K562 (cell line): ENCODE measurements at regions of chr2 and their contacts with region 1.

Region 1: DNA sequence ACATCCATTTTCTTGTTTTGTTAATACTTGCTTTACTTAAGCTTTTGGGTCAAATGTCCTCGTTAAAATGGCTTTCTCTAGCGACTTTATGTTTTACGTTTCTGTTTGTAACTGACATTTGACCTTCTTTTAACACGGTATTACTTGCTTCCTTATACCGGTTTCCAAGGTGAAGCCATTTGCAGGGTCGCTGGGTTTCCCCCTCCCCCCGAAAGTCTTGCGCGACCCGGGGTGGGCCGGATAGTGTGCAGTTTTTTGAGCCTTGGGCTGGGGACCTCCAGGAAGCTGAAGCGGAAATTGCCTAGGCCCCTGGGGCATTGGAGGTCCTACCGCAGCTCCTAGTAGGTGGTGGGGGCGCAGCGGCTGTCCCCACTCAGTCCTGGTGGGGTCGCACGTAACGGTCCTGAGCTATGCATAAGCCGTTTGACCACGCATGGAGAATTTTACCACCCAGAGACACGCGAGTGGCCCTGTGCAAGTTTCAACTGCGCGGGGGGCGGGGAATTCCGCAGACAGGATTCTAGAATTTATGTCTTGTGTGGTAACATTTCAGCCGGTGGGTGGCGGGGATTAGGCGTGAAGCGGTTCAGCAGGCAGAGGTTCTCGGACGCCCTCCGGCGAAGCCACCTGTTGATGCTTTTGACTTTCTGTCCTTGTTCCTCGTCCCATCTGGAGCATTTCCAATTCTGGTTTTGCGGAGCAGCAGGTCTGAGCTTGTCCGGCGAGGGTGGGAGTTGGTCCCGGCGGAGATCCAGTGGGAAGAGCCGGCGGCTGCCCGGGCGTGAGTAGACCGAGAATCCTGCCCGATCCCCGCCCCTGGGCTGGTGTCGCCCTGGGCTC is 2.4 kb downstream of the CFLAR start:
- DNase-seq: peak; percentile 52 to 92 (median 58)
- ATAC-seq: peak; percentile 60
- H3K4me3 ChIP-seq: peak overlapping the region; percentile 93
- H3K27ac ChIP-seq: peak overlapping the region; percentile 98
- H3K4me1 ChIP-seq: peaks cover 17 to 27% of the 10 kb centered on the region in 2 experiments; a peak in 4 of 5 replicates
- H3K27me3 ChIP-seq: no peaks in the 10 kb centered on the region
- CTCF ChIP-seq: peak; percentile 67 to 89 (median 83)
- EP300 ChIP-seq: no peak; the same call in 1 of the 2 replicates
- POLR2A ChIP-seq: peak; percentile 69
- RAD21 ChIP-seq: peak; percentile 19 to 65; a peak in 3 of 4 replicates

Region 2: DNA sequence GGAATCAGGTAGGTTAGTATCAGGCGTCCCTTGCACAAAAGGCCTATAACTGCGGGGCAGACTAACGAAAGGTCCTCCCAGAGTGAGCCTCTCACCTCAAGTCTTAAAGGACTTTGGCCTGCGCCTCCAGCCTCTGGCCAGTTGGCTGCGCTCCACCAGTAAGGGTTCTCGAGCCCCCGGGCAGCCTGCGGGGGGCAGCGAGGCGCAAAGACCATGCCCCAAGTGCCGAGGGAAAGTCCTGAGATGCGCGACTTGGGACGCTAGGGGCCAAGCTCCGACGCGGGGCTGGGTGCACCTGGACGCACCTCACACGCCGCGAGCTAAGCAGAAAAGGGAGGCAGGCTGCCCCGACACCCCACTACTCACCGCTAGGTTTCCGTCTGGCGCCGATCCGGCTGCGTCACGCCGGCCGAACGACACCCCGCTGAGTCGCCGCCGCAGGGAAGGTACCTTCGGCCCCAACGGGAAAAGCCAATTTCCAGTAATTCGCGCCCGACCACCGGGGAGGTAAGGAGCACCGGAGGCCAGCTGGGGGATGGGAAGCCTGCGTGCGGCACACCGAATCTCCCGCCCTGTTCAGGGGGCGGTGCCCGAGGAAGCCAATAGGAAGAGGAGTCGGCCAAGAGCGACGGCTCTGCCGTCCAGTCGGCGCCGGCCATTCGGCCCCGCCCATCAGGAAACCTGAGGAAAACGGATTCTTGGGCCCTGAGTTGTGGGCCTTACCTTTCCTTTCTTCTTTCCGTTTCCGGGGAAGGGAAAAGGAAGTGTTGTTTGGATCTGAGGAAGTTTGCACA is 155.0 kb before region 1 on chr2 and contains the start of gene ORC2:
- CTCF ChIA-PET with region 1: no interaction called
- POLR2A ChIA-PET with region 1: interaction called, 3 read pairs
- in situ Hi-C with region 1: no loop called
- intact Hi-C with region 1: loop called (anchors 2 kb)
- DNase-seq: peak; percentile 94 to 96 (median 94)
- ATAC-seq: peak; percentile 93
- H3K4me3 ChIP-seq: peak within 1 kb of the TSS; percentile 63
- H3K27ac ChIP-seq: peak within 1 kb of the TSS; percentile 94
- H3K4me1 ChIP-seq: peaks cover 8 to 10% of the 10 kb centered on the region in 2 experiments; a peak in 4 of 5 replicates
- H3K27me3 ChIP-seq: no peaks in the 10 kb centered on the region
- CTCF ChIP-seq: peak; percentile 73 to 97 (median 77)
- EP300 ChIP-seq: no peak
- POLR2A ChIP-seq: peak; percentile 81
- RAD21 ChIP-seq: peak; percentile 46 to 59
- polyA plus RNA-seq, gene ORC2: 5.6 to 9.7 TPM

Region 3: GRCh38 chr2:201071479-201072200 is 46.7 kb before region 1 on chr2 and contains the starts of genes HYCC2 and NDUFB3:
- CTCF ChIA-PET with region 1: interaction called, 4 read pairs
- POLR2A ChIA-PET with region 1: interaction called, 4 read pairs
- in situ Hi-C with region 1: no loop called
- intact Hi-C with region 1: loop called (anchors 2 kb)
- DNase-seq: peak; percentile 94 to 98 (median 96)
- ATAC-seq: peak; percentile 92
- H3K4me3 ChIP-seq: peak within 1 kb of the TSS; percentile 83
- H3K27ac ChIP-seq: peak within 1 kb of the TSS; percentile 99
- H3K4me1 ChIP-seq: peaks cover 4 to 5% of the 10 kb centered on the region in 2 experiments; a peak in 3 of 5 replicates
- H3K27me3 ChIP-seq: no peaks in the 10 kb centered on the region
- CTCF ChIP-seq: peak; percentile 38 to 47 (median 42); a peak in 4 of 6 replicates
- EP300 ChIP-seq: 0 out of 2 replicates have a peak, but pooled peaks have one; percentile 17
- POLR2A ChIP-seq: peak; percentile 84
- RAD21 ChIP-seq: 0 out of 4 replicates have a peak, but pooled peaks of 1 of the 2 experiments have one; percentile 2
- polyA plus RNA-seq, gene HYCC2: 7.5 to 9.8 TPM
- polyA plus RNA-seq, gene NDUFB3: 679 to 786 TPM

Region 4: DNA sequence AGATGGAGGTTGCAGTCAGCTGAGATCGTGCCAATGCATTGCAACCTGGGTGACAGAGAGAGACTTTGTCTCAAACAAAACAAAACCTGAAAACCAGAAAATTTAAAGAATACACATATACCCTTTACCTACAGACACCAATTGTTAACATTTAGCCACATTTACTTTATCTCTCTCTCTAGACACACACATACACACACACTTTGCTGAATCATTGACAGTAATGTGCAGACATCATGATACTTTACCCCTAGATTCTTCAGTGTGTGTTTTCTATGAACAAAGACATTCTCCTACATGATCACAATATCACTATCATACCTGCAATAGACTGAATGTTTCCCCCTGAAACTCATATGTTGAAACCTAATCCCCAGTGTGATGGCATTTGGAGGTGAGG is 12.6 kb before region 1 on chr2:
- CTCF ChIA-PET with region 1: no interaction called
- POLR2A ChIA-PET with region 1: interaction called, 12 read pairs
- in situ Hi-C with region 1: no loop called
- intact Hi-C with region 1: no loop called
- DNase-seq: no peak
- ATAC-seq: peak; percentile 72
- H3K4me3 ChIP-seq: no peak overlapping the region
- H3K27ac ChIP-seq: peak overlapping the region; percentile 49; the same call in 2 of the 3 replicates
- H3K4me1 ChIP-seq: peaks cover 6 to 8% of the 10 kb centered on the region in 2 experiments; a peak in 3 of 5 replicates
- H3K27me3 ChIP-seq: no peaks in the 10 kb centered on the region
- CTCF ChIP-seq: no peak
- EP300 ChIP-seq: no peak
- POLR2A ChIP-seq: no peak
- RAD21 ChIP-seq: no peak

Region 5: GRCh38 chr2:201158111-201158929 is 40.0 kb after region 1 on chr2:
- CTCF ChIA-PET with region 1: interaction called, 8 read pairs
- POLR2A ChIA-PET with region 1: interaction called, 3 read pairs
- in situ Hi-C with region 1: no loop called
- intact Hi-C with region 1: loop called (anchors 1 kb)
- DNase-seq: peak; percentile 42 to 82 (median 60)
- ATAC-seq: peak; percentile 94
- H3K4me3 ChIP-seq: no peak overlapping the region
- H3K27ac ChIP-seq: peak overlapping the region; percentile 66
- H3K4me1 ChIP-seq: peaks cover 7 to 17% of the 10 kb centered on the region in 2 experiments; a peak in 4 of 5 replicates
- H3K27me3 ChIP-seq: no peaks in the 10 kb centered on the region
- CTCF ChIP-seq: peak; percentile 61 to 84 (median 75)
- EP300 ChIP-seq: peak; percentile 74
- POLR2A ChIP-seq: no peak
- RAD21 ChIP-seq: peak; percentile 86 to 90

Region 6: DNA sequence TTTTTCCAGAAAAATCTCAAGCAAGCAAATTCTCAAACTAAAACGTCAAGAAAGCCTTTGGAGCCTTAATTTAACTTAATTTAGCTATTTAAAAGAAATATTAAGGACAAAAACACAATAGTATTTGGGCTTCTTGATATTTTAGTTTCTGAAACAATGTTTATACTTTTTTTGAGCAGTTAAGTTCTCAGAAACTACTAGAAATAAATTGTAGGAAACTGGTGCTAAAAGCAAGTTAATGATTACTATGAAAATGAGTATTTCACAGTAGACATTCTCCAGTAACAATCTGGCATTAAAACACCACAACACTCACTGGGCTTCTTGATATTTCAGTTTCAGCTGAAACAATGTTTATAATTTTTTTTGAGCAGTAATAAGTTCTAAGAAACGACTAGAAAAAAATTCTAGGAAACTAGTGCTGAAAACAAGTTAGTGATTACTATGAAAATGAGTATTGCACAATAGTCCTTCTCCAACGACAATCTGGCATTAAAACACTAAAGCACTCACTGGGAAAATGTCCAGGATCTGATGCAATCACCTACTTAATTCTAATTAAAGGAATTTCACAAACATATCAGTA is 287.8 kb after region 1 on chr2:
- CTCF ChIA-PET with region 1: no interaction called
- POLR2A ChIA-PET with region 1: no interaction called
- in situ Hi-C with region 1: no loop called
- intact Hi-C with region 1: loop called (anchors 5 kb)
- DNase-seq: peak; percentile 9 to 57 (median 18)
- ATAC-seq: peak; percentile 15
- H3K4me3 ChIP-seq: peak overlapping the region; percentile 37; the same call in 1 of the 2 replicates
- H3K27ac ChIP-seq: peak overlapping the region; percentile 75; the same call in 2 of the 3 replicates
- H3K4me1 ChIP-seq: peaks cover 11 to 18% of the 10 kb centered on the region in 2 experiments; a peak in 4 of 5 replicates
- H3K27me3 ChIP-seq: no peaks in the 10 kb centered on the region
- CTCF ChIP-seq: no peak
- EP300 ChIP-seq: peak; percentile 90
- POLR2A ChIP-seq: no peak
- RAD21 ChIP-seq: no peak